ENCODE measurements at regions of chr1 and their contacts with region 1.

Region 1: DNA sequence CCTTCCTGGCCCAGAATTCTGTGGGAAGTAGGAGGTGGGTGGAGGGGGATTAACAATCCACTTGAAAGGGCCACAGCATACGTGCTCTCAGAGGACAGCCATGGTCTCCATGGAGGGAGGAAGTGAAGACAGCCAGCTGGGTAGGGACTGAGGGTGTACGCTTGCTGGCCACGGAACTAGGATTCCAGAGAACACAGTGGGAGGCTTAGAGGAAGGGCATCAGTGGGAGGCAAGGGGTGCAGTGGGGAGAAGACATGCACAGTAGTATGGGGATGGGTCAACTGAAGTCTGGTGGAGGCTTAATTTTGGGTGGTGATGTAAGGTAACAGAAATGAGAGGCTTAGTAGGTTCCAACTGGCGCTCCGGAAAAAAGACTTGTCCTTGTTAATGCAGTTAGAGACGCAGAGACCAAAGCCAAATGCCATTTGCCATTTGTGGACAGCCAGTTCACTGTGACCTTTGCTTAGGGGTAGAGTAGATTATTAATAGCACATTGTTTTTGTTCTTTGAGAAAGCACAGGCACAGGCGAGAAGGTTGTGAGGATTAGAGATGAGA is 103.0 kb downstream of the ZSCAN20 start:
- DNase-seq: peak; percentile 20 to 84
- ATAC-seq: peak; percentile 81 to 95 (median 92)
- H3K4me3 ChIP-seq: peak overlapping the region in 1 of 10 donors; percentile 9
- H3K27ac ChIP-seq: peak overlapping the region; percentile 70 to 96 (median 90)
- H3K4me1 ChIP-seq: peaks cover 17 to 84% (median 47%) of the 10 kb centered on the region in 9 donors
- H3K27me3 ChIP-seq: no peaks in the 10 kb centered on the region
- CTCF ChIP-seq: no peak

Region 2: DNA sequence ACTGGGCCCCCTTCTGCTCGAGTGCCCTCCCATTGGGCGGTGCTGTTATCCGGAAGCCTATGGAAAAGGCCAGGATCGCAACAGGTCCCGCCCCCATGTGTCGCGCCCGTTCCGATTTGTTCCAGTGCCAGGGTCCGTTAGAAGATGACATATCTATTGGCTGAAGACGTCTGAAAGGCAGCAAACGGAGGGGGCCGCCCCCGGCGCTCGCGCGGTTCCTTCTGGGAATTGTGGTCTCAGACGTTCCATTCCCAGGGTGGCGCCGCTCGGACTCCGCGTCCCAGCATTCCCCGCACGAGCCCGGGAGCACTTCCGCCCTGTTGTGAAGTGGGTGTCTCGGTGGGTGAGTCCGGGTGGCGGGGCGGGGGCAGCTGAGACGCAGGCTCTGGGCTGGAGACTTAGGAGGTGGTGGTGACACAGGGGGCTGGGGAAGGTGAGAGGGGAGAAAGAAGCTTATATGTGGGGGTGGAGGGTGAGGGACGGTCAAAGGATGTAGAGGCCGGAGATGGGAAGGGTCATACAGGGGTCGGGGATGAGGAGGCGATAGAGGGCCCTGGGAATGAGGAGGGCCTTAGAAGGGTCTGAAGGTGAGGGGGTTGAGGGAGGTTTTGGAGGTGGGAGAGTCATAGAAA is 102.9 kb before region 1 on chr1 and contains the start of gene ZSCAN20:
- intact Hi-C with region 1: loop called in 4 of 10 experiments (anchors 2 to 10 kb)
- DNase-seq: peak; percentile 98 to 99
- ATAC-seq: peak; percentile 89 to 97 (median 94)
- H3K4me3 ChIP-seq: peak within 1 kb of the TSS; percentile 19 to 77 (median 64)
- H3K27ac ChIP-seq: peak within 1 kb of the TSS; percentile 59 to 92 (median 84)
- H3K4me1 ChIP-seq: peaks cover 3 to 65% (median 41%) of the 10 kb centered on the region in 9 donors
- H3K27me3 ChIP-seq: no peaks in the 10 kb centered on the region
- CTCF ChIP-seq: no peak
- total RNA-seq, gene ZSCAN20: 3.4 to 9.3 (median 5.8) TPM

Region 3: GRCh38 chr1:33524586-33524985 is 50.8 kb before region 1 on chr1:
- intact Hi-C with region 1: loop called in 1 of 10 experiments (anchors 5 kb)
- DNase-seq: no peak
- ATAC-seq: peak in 1 of 8 donors; percentile 29
- H3K4me3 ChIP-seq: no peak overlapping the region
- H3K27ac ChIP-seq: no peak overlapping the region
- H3K4me1 ChIP-seq: no peaks in the 10 kb centered on the region
- H3K27me3 ChIP-seq: no peaks in the 10 kb centered on the region
- CTCF ChIP-seq: no peak

Region 4: DNA sequence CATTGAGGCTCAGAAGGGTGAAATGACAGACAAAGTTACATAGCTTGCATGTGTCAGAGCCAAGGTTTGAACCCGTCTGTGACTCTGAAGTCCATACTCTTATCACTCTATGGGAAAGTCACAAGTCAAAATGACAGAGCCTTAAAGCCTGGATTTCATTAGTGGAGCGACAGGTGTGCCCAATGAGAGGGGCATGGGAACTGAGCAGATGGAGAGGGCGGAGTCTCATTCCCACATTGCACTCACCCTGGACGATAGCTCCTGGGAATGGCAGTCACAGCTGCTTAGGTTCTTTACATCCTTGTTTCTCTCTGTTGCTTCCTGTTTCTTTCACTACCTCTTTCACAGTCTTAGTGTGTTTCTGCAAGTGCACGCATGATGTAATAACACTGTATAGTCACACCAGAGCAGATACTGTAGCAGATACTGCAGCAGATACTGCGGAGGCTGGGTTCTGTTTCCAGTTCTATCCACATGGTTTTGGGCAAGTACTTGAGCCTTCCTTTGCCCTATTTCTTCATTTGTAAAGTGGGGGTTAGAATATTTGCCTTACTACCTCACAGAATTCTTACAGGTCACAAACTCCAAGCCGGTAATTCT is 24.2 kb after region 1 on chr1:
- intact Hi-C with region 1: loop called in 1 of 10 experiments (anchors 2 kb)
- DNase-seq: no peak
- ATAC-seq: no peak
- H3K4me3 ChIP-seq: no peak overlapping the region
- H3K27ac ChIP-seq: no peak overlapping the region
- H3K4me1 ChIP-seq: peaks cover 0 to 4% (median 0%) of the 10 kb centered on the region in 9 donors
- H3K27me3 ChIP-seq: no peaks in the 10 kb centered on the region
- CTCF ChIP-seq: no peak